ENCODE measurements at regions of chr1 and their contacts with region 1.

Region 1: GRCh38 chr1:115980998-115981993 is 5.0 kb downstream of the SLC22A15 start:
- DNase-seq: peak; percentile 55
- H3K4me3 ChIP-seq: no peak overlapping the region
- H3K27ac ChIP-seq: no peak overlapping the region
- H3K4me1 ChIP-seq: no peaks in the 10 kb centered on the region
- CTCF ChIP-seq: peak; percentile 86

Region 2: DNA sequence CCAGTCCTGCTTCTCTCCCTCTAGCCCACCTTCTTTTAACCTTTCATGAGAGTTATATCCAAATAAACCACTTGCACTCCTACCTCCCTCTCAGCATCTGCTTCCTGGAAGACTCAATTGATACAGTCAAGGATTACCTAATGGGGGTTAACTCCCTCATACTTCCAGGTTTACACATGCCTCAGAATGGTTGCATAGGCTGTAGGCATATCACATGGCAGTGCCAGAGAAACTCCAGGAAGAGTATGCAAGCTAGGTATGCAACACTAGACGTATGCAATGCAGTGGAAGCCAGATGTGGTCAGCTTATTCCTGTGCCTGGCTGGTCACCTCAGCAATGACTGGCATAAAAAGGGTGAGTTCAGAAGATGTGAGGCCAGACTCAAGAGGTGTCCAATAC is 372.3 kb before region 1 on chr1:
- CTCF ChIA-PET with region 1: no interaction called
- POLR2A ChIA-PET with region 1: no interaction called
- intact Hi-C with region 1: loop called (anchors 10 kb)
- DNase-seq: no peak
- H3K4me3 ChIP-seq: no peak overlapping the region
- H3K27ac ChIP-seq: no peak overlapping the region
- H3K4me1 ChIP-seq: no peaks in the 10 kb centered on the region
- CTCF ChIP-seq: no peak

Region 3: DNA sequence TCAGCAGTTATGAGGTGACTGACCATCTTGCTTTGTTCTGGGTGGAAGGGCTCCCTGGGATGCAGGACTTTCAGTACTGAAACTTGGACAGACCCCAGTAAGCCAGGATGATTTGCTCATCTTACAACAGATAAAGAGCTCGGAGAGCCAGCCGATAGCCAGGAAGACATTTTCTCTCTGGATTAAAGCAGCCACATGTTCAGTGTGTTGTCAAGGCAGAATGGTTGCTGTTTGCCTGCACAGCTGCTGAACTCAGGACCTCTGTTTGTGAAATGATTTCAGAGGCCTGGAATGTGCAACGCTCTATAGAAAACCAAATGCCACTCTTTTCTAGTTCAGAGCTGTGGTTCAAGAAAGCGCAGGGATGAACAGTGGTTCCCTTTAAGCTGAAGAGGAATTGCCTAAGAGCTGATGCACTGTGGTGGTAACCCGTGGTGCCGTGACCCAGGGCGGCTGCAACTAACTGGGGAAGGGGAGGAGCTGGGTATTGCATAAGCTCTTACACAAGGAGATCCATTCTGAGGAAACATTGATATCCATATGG is 253.5 kb before region 1 on chr1:
- CTCF ChIA-PET with region 1: no interaction called
- POLR2A ChIA-PET with region 1: no interaction called
- intact Hi-C with region 1: no loop called
- DNase-seq: no peak
- H3K4me3 ChIP-seq: no peak overlapping the region
- H3K27ac ChIP-seq: no peak overlapping the region
- H3K4me1 ChIP-seq: no peaks in the 10 kb centered on the region
- CTCF ChIP-seq: no peak

Region 4: DNA sequence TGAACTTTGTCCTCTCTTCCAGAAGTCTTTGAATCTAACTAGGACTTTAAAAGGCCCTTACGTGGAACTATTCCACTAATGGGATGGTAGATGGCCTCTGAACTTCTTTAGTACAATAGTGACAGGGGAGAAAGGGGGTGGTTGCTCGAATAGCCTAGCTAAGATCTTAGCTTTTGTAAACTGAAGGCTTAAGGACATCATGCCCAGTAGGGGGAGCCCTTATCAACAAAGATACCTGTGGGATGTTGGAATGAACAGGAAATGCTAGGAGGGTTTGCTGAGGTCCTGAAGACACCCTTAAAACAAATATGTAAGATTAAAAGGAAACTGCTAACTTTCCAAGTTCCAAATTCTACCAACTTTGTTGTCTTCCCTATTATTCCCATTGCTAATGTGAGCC is 173.6 kb before region 1 on chr1:
- CTCF ChIA-PET with region 1: interaction called, 5 read pairs
- POLR2A ChIA-PET with region 1: no interaction called
- intact Hi-C with region 1: loop called (anchors 1 kb)
- DNase-seq: peak; percentile 69
- H3K4me3 ChIP-seq: no peak overlapping the region
- H3K27ac ChIP-seq: no peak overlapping the region
- H3K4me1 ChIP-seq: no peaks in the 10 kb centered on the region
- CTCF ChIP-seq: peak; percentile 87

Measured in OCI-LY7 (cell line).